Astrocyte of the cerebellum (primary cell): ENCODE measurements at regions of chr1 and their contacts with region 1.

Region 1: DNA sequence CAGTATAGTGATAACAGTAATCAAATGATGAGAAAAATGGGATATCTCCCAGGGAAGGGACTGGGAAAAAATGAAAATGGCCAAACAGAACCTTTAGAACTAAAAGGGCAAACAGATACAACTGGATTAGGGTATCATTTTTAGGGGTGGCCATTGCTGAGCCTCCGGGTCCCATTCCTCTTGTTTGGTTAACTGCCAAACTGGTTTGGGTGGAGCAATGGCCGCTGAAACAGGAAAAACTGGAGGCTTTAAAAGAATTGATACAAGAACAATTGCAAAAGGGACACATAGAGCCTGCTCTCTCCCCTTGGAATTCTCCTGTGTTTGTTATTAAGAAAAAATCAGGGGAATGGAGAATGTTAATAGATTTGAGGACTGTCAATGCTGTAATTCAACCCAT is 10.6 kb upstream of the PM20D1 start:
- DNase-seq: no peak
- H3K4me3 ChIP-seq: no peak overlapping the region
- CTCF ChIP-seq: no peak

Region 2: GRCh38 chr1:205805082-205805712 is 55.4 kb before region 1 on chr1:
- in situ Hi-C with region 1: loop called (anchors 5 kb)
- DNase-seq: no peak
- H3K4me3 ChIP-seq: no peak overlapping the region
- CTCF ChIP-seq: no peak

Region 3: DNA sequence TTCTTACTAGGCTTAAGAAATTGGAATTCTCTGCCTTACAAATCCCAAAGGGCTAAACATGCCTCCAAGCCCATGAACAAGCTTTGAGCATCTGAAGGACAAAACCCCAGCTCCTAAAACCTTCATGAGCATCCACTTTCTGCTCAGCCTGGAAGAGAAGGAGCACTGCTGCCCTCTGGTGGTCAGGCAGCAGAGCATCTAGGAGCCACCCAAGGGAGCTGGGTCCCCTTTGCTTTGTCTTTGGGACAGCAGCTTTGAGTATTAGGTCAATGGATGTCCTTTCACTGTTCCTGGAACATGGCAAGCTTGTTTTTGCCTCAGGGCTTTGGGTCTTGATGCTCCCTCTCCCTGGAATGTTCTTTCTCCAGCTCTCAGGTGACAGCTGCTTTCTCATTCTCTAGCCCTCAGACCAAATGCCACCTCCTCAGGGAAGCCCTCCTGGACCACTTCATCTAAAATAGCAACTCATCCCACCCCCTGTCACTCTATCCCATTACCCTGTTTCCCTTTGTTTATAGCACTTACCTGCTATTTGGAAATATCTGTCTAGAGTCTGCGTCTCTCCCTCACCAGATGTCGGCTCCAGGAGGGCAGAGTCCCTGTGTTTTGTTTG is 116.9 kb after region 1 on chr1:
- in situ Hi-C with region 1: no loop called
- DNase-seq: peak; percentile 60
- H3K4me3 ChIP-seq: no peak overlapping the region
- CTCF ChIP-seq: peak; percentile 97